CD14-positive monocyte (primary cell): ENCODE measurements at regions of chr11 and their contacts with region 1.

Region 1: DNA sequence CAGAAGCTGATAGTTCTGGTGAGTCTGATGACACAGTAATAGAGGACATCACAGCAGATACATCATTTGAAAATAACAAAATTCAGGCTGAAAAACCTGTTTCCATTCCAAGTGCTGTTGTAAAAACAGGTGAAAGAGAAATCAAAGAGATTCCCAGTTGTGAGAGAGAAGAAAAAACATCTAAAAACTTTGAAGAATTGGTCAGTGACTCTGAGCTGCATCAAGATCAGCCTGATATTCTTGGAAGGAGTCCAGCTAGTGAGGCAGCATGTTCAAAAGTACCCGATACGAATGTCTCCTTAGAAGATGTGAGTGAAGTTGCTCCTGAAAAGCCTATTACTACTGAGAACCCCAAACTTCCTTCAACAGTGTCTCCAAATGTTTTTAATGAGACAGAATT is 38.7 kb downstream of the RTN3 start:
- DNase-seq: no peak
- H3K4me3 ChIP-seq: no peak overlapping the region
- H3K4me3 Mint-ChIP-seq: no peak overlapping the region
- H3K27ac ChIP-seq: no peak overlapping the region
- H3K27ac Mint-ChIP-seq: no peak overlapping the region
- H3K4me1 ChIP-seq: no peaks in the 10 kb centered on the region
- H3K4me1 Mint-ChIP-seq: peaks cover 5% of the 10 kb centered on the region
- H3K27me3 ChIP-seq: no peaks in the 10 kb centered on the region
- H3K27me3 Mint-ChIP-seq: no peaks in the 10 kb centered on the region
- CTCF ChIP-seq: no peak

Region 2: DNA sequence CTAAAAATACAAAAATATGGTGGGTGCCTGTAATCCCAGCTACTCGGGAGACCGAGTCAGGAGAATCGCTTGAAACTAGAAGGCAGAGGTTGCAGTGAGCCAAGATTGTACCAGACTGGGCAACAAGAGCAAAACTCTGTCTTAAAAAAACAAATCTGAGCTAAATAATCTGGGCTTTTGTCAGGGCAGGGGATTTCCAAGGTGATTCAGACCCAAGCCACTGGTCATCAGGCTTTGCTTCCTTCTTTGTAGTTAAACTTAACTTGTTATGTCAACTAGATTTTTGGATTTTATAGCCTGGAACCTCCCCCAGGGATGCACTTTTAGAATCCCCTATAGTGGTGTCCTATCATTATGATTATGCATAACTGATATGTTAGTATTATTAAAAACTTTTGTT is 677.4 kb before region 1 on chr11:
- intact Hi-C with region 1: loop called in 1 of 2 experiments (anchors 10 kb)
- DNase-seq: peak in 1 of 3 donors; percentile 28
- H3K4me3 ChIP-seq: no peak overlapping the region
- H3K4me3 Mint-ChIP-seq: no peak overlapping the region
- H3K27ac ChIP-seq: no peak overlapping the region
- H3K27ac Mint-ChIP-seq: no peak overlapping the region
- H3K4me1 ChIP-seq: no peaks in the 10 kb centered on the region
- H3K4me1 Mint-ChIP-seq: no peaks in the 10 kb centered on the region
- H3K27me3 ChIP-seq: no peaks in the 10 kb centered on the region
- H3K27me3 Mint-ChIP-seq: peaks cover 0 to 23% (median 5%) of the 10 kb centered on the region in 3 donors
- CTCF ChIP-seq: no peak